Sigmoid colon (tissue), 7 donors: ENCODE measurements at regions of chr22 and their contacts with region 1.

Region 1: DNA sequence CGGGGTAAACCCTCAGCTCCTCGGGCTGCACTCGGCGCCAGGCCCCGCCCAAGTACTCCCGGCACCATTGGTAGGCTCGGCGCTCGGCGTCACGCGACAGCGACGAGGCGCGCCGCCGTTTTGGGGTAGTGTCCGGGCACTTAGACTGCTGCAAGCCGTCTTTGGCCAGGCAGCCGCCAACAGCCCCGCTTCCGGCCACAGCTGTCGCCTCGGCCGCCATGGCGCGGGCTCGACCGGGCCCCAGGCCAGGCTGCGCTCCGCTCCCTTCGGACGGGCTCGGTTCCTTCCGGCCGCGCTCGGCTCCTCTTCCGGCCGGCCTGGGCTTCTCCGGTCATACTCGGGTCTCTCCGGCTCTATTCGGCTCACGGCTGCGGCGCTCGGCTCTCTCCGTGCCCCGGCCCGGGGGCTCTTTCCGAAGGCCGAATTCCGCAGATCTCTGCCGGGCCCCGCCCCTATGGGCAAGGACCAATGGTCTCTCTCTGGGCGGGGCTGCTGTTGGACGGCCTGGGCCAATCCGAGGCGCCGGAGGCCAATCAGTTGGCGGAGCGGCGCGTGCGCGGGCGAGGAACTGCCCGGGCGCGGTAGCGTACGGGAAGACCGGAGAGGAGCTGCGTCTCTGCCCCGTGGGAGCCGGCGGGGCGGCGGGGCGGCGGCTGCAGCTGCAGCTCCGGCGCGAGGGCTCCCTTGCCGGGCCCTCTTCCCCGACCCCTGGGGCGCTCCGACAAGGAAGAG is at the start of gene CHKB:
- DNase-seq: peak; percentile 99
- H3K4me3 ChIP-seq: peak within 1 kb of the TSS; percentile 85 to 92 (median 89)
- H3K27ac ChIP-seq: peak within 1 kb of the TSS; percentile 97 to 99 (median 98)
- H3K4me1 ChIP-seq: peaks cover 0 to 35% (median 32%) of the 10 kb centered on the region in 4 donors
- H3K27me3 ChIP-seq: peaks cover 9 to 12% (median 11%) of the 10 kb centered on the region in 3 donors
- CTCF ChIP-seq: no peak
- EP300 ChIP-seq: no peak
- POLR2A ChIP-seq: peak; percentile 48 to 63
- total RNA-seq, gene CHKB: 22.0 to 55.1 (median 39.2) TPM

Region 2: GRCh38 chr22:50562523-50563412 is 20.0 kb before region 1 on chr22 and contains the start of gene SYCE3:
- intact Hi-C with region 1: loop called (anchors 2 kb)
- DNase-seq: peak; percentile 98
- H3K4me3 ChIP-seq: peak within 1 kb of the TSS; percentile 29 to 63 (median 55)
- H3K27ac ChIP-seq: peak within 1 kb of the TSS in 3 of 4 donors; percentile 36 to 53 (median 40)
- H3K4me1 ChIP-seq: peaks cover 0 to 11% (median 8%) of the 10 kb centered on the region in 4 donors
- H3K27me3 ChIP-seq: no peaks in the 10 kb centered on the region
- CTCF ChIP-seq: peak; percentile 78 to 97 (median 90)
- EP300 ChIP-seq: no peak
- POLR2A ChIP-seq: peak in 1 of 2 donors; percentile 85
- total RNA-seq, gene SYCE3: not detected

Region 3: DNA sequence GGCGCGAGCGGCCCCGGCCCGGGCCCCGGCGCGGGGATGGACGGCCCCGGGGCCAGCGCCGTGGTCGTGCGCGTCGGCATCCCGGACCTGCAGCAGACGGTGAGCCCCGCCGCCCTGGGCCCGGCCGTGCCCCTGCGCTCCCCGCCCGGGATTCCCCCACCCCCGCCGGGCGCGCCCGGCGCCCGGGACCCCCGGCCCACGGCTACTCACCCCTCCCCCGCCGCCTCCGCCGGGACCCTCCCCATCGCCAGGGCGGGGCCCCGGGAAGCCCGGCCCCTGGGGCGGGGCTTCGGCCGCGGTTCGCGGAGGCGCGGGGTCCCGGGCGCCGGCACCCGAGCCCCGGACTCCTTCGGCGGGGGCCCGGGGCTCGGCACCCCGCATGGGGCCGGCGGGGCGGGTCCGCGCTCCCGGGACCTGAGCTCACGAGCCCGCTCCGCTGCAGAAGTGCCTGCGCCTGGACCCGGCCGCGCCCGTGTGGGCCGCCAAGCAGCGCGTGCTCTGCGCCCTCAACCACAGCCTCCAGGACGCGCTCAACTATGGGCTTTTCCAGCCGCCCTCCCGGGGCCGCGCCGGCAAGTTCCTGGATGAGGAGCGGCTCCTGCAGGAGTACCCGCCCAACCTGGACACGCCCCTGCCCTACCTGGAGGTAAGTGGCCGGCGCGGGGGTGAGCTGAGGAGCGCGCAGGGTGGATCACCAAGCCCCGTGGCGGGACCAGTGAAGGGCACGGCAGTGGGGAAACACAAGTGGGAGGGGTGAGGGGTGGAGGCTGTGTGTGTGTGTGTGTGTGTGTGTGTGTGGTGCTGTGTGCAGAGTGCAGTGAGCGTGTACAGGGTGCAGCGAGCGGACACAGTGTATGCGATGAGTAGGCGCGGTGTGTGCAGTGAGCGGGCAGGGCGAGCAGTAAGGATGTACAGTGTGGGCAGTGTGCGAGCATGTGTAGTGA is 92.2 kb after region 1 on chr22:
- intact Hi-C with region 1: no loop called
- DNase-seq: no peak
- H3K4me3 ChIP-seq: peak overlapping the region in 3 of 4 donors; percentile 28 to 44 (median 41)
- H3K27ac ChIP-seq: no peak overlapping the region
- H3K4me1 ChIP-seq: peaks cover 0 to 18% (median 15%) of the 10 kb centered on the region in 4 donors
- H3K27me3 ChIP-seq: peaks cover 22 to 62% (median 39%) of the 10 kb centered on the region in 3 donors
- CTCF ChIP-seq: no peak
- EP300 ChIP-seq: no peak
- POLR2A ChIP-seq: no peak